ENCODE measurements at regions of chr7 and their contacts with region 1.

Region 1: DNA sequence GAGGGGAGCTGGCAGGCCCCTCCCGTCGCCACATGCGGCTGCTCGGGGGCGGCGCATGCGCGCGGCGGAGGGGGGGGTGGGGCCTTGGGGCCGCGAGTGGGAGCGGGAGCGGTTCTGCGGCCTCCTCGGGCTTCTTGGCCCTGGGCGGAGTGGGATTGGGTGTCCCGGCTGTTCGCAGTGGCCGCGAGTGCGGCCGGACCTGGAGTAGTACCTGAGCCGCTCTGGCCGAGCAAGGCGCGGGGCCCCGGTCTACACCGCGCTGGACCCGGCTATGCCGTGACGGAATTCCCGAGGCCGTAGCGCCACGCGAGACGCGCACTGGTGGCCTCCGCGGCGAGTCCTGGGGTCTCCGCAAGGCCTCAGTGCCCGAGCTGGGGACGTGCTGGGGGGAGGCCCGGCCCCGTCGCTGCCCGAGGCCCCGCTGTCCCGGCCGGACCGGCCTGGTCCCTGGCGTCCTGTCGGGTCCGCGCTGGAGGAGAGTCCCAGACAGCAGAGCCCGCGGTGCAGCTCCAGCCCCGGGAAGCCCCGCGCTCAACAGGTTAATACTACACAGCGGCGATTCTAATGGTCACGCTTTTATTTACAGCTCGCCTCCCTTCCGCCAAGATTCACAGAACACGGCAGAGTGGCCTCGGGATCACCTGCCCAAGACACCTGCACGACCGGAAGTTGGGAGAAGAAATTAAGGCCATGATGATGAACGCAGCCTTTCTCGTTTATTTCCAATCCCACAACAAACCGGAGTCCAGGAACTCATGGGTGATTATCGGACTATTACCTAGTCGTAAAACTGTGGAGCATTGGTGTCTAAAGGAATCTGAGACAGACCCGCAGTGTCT is 671 bp upstream of the PAXIP1 start:
- DNase-seq: peak; percentile 80 to 92 (median 88)
- H3K4me3 ChIP-seq: peak overlapping the region; percentile 81 to 91
- H3K4me3 Mint-ChIP-seq: peak overlapping the region; percentile 93 to 97 (median 95)
- H3K27ac ChIP-seq: peak overlapping the region; percentile 84
- H3K27ac Mint-ChIP-seq: peak overlapping the region; percentile 38 to 96 (median 95)
- H3K4me1 ChIP-seq: peaks cover 19% of the 10 kb centered on the region
- H3K4me1 Mint-ChIP-seq: peaks cover 8 to 16% (median 12%) of the 10 kb centered on the region in 4 donors
- H3K27me3 ChIP-seq: no peaks in the 10 kb centered on the region
- H3K27me3 Mint-ChIP-seq: no peaks in the 10 kb centered on the region

Region 2: DNA sequence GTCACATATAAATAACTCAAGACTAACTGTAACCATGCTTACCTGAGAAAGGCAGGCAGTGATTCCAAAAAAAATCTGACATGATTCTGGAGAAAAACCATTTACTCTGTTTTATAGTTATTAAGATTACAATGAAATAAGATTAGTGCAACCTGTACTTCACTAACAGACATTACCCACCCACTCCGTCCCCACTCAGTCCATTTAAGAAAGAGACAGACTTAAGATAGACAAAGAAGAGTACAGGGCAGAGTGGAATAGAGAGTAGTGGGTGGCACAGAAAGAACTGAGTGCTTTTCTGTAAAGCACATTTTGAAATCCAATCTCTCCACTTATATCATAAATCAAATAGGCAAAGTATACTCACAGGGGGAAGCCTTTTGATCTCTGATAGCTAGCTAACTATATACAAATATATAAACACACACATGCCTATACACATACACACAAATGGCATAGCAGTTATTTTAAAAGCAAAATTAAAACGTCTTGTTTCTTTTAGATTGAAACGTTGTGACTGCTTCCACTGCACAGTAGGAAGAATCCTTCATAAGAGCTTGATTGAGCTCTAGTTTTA is 12.5 kb before region 1 on chr7:
- CTCF ChIA-PET with region 1: interaction called, 8 read pairs
- POLR2A ChIA-PET with region 1: interaction called, 10 read pairs
- intact Hi-C with region 1: no loop called
- DNase-seq: no peak
- H3K4me3 ChIP-seq: no peak overlapping the region
- H3K4me3 Mint-ChIP-seq: no peak overlapping the region
- H3K27ac ChIP-seq: no peak overlapping the region
- H3K27ac Mint-ChIP-seq: no peak overlapping the region
- H3K4me1 ChIP-seq: no peaks in the 10 kb centered on the region
- H3K4me1 Mint-ChIP-seq: peaks cover 0 to 12% (median 8%) of the 10 kb centered on the region in 4 donors
- H3K27me3 ChIP-seq: no peaks in the 10 kb centered on the region
- H3K27me3 Mint-ChIP-seq: no peaks in the 10 kb centered on the region

Region 3: GRCh38 chr7:155644178-155644970 is 640.8 kb after region 1 on chr7 and contains the start of gene RBM33:
- CTCF ChIA-PET with region 1: no interaction called
- POLR2A ChIA-PET with region 1: interaction called, 10 read pairs
- intact Hi-C with region 1: no loop called
- DNase-seq: peak; percentile 81 to 88 (median 84)
- H3K4me3 ChIP-seq: peak within 1 kb of the TSS; percentile 45 to 92
- H3K4me3 Mint-ChIP-seq: peak within 1 kb of the TSS; percentile 98 to 100 (median 100)
- H3K27ac ChIP-seq: peak within 1 kb of the TSS; percentile 94
- H3K27ac Mint-ChIP-seq: peak within 1 kb of the TSS; percentile 97 to 100 (median 100)
- H3K4me1 ChIP-seq: peaks cover 41% of the 10 kb centered on the region
- H3K4me1 Mint-ChIP-seq: peaks cover 33 to 56% (median 44%) of the 10 kb centered on the region in 4 donors
- H3K27me3 ChIP-seq: no peaks in the 10 kb centered on the region
- H3K27me3 Mint-ChIP-seq: no peaks in the 10 kb centered on the region
- total RNA-seq, gene RBM33: 161 to 167 TPM

Measured in CD4-positive, alpha-beta memory T cell (primary cell).